PC-9 (cell line): ENCODE measurements at regions of chr1 and their contacts with region 1.

Region 1: DNA sequence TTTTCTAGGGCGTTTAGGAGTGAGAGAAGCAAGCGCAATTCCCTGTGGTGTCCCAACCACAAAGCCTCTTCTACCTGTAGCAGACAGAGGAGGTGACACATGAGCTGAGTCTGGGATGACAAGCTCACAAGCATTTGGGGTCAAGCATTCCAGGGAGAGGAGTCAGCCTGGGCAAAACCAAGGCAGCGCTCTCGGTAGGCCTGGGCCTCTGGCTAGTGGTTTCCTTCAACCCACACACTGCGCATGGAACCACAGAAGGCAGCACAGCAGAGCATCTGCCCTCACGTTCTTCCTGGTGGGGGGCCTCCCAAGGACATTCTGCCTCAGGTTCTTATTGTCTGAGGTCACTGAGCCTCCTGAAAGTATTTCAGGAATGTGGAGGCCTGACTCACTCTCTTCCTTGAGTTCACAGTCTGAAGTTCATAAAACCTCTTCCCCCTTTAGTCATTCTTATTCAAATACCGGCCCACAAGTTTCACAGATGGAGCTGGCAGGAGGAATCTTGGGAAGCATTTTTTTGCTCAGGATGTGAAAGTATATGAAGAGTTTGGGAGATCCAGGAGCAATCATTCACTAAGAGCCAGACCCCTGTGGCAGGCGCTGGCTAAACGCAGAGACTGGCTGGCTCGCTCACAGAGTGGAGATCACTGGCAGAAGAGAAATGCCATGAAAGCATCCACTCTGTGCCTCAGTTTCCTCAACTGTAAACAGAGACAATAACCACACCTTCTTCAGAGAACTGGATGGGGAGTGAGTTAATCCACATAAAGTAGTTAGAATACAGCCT is 26.8 kb downstream of the CCN1 start:
- DNase-seq: peak; percentile 95 to 100
- H3K4me3 ChIP-seq: peak overlapping the region; percentile 13; the same call in 1 of the 2 replicates
- H3K27ac ChIP-seq: peak overlapping the region; percentile 85
- H3K4me1 ChIP-seq: peaks cover 58% of the 10 kb centered on the region
- H3K27me3 ChIP-seq: no peaks in the 10 kb centered on the region
- CTCF ChIP-seq: no peak

Region 2: DNA sequence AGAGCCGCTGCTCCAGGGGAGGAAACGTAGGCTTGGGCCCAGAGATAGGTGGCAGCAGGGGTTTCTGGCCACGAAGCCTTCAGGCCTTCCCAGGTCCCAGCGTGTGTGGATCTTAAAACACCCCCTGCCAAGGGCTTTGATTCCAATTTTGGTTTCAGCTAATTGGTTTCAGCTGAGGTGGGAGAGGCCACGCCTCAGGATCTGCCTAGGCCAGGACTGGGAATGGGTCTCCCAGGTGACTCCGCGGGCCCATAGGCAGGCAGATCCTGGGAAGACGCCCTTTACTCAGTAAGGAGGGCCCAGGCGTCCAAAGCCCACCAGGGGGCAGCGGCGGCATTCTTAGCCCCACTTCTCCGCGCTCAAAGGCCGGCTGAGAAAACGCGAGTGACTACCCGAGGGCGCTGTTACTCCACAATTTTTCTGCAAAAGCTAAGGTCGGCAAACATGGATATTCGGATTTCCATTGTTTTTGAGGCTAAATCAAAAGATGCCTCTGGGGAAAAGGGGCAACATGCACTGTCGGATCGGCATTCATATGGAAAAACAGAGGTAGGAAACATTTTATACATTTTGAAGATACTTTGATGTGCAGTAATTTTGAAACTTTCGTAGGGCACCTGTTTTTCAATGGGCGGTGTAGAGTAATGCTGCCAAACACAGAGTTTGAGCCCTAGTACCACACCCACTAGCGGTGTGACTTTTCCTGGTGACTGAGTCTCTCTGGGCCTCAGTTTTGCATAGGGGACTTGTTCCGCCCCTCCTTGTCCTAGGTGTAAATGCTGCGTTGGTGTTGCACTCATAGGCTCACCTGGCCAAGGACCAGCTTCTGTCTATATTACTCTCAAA is 299.1 kb before region 1 on chr1:
- CTCF ChIA-PET with region 1: no interaction called
- POLR2A ChIA-PET with region 1: no interaction called
- intact Hi-C with region 1: loop called (anchors 1 kb)
- DNase-seq: peak; percentile 50 to 87
- H3K4me3 ChIP-seq: no peak overlapping the region
- H3K27ac ChIP-seq: no peak overlapping the region
- H3K4me1 ChIP-seq: peaks cover 3% of the 10 kb centered on the region
- H3K27me3 ChIP-seq: no peaks in the 10 kb centered on the region
- CTCF ChIP-seq: peak; percentile 81

Region 3: GRCh38 chr1:85484264-85484663 is 123.1 kb before region 1 on chr1:
- CTCF ChIA-PET with region 1: no interaction called
- POLR2A ChIA-PET with region 1: no interaction called
- intact Hi-C with region 1: no loop called
- DNase-seq: no peak
- H3K4me3 ChIP-seq: no peak overlapping the region
- H3K27ac ChIP-seq: no peak overlapping the region
- H3K4me1 ChIP-seq: peaks cover 6% of the 10 kb centered on the region; the same call in 1 of the 2 replicates
- H3K27me3 ChIP-seq: no peaks in the 10 kb centered on the region
- CTCF ChIP-seq: no peak

Region 4: DNA sequence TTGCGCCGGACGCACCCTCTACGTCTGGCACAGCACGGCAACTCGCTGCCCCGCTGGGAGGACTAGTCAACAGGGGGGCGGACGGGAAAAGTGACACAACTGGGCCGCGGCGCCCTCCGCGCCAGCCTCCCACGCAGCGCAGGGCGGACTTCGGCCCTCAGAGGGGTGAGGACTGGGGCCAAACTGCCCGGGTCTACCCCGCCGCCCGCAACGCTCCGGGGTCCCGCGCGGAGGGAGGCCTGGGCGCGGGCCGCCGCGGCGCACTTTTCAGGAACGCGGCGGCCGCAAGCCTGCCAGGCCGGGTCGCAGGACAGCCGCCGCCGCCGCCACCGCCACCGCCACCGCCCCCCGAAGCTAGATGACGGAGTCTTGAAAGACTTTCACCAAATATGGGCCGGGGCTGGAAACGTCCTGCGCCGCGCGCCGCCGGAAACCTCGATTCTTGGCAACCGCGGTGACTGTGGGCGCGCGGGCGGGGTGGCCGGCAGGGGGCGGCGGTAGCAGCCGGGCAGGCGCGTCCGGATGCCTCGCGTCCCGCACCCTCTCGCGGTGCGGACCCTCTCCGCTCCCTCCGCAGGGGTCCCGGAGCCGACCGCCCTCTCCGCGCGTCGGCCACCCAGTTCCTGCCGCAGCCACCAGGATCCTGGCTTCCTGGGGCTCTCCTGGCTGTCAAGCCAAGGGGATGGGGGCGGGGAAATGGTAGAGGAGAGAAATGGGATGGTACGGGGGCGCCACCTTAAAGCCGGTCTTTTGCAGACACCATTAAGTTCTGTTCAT is 30.5 kb before region 1 on chr1:
- CTCF ChIA-PET with region 1: no interaction called
- POLR2A ChIA-PET with region 1: interaction called, 8 read pairs
- intact Hi-C with region 1: loop called (anchors 2 kb)
- DNase-seq: peak; percentile 74 to 83
- H3K4me3 ChIP-seq: peak overlapping the region; percentile 74
- H3K27ac ChIP-seq: peak overlapping the region; percentile 47
- H3K4me1 ChIP-seq: peaks cover 50% of the 10 kb centered on the region
- H3K27me3 ChIP-seq: no peaks in the 10 kb centered on the region
- CTCF ChIP-seq: peak; percentile 79

Region 5: DNA sequence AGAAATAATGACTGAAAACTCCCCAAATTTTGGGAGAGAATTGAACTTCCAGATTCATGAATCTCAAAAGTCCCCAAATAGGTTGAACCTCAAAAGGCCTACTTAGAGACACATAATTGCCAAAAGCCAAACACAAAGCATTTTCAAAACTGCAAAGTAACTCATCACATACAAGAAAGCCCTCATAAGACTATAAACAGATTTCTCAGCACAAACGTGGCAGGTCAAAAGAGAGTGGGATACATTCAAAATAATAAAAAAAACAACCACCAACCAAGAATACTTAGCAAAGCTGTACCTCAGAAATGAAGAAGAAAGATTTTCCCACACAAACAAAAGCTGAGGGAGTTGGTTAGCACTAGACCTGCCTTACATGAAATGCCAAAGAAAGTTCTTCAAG is 31.1 kb after region 1 on chr1:
- CTCF ChIA-PET with region 1: interaction called, 5 read pairs
- POLR2A ChIA-PET with region 1: interaction called, 7 read pairs
- intact Hi-C with region 1: loop called (anchors 1 kb)
- DNase-seq: no peak
- H3K4me3 ChIP-seq: no peak overlapping the region
- H3K27ac ChIP-seq: no peak overlapping the region
- H3K4me1 ChIP-seq: no peaks in the 10 kb centered on the region
- H3K27me3 ChIP-seq: no peaks in the 10 kb centered on the region
- CTCF ChIP-seq: no peak

Region 6: GRCh38 chr1:85707990-85708828 is 100.9 kb after region 1 on chr1 and contains the start of gene ZNHIT6:
- CTCF ChIA-PET with region 1: no interaction called
- POLR2A ChIA-PET with region 1: no interaction called
- intact Hi-C with region 1: loop called (anchors 5 kb)
- DNase-seq: peak; percentile 91 to 98
- H3K4me3 ChIP-seq: peak within 1 kb of the TSS; percentile 79
- H3K27ac ChIP-seq: peak within 1 kb of the TSS; percentile 67
- H3K4me1 ChIP-seq: peaks cover 22% of the 10 kb centered on the region
- H3K27me3 ChIP-seq: no peaks in the 10 kb centered on the region
- CTCF ChIP-seq: peak; percentile 73
- total RNA-seq, gene ZNHIT6: 13.7 and 16.1 TPM in 2 replicates

Region 7: GRCh38 chr1:86507935-86508582 is 900.7 kb after region 1 on chr1:
- CTCF ChIA-PET with region 1: interaction called, 4 read pairs
- POLR2A ChIA-PET with region 1: no interaction called
- intact Hi-C with region 1: loop called (anchors 5 kb)
- DNase-seq: no peak
- H3K4me3 ChIP-seq: no peak overlapping the region
- H3K27ac ChIP-seq: no peak overlapping the region
- H3K4me1 ChIP-seq: peaks cover 9% of the 10 kb centered on the region
- H3K27me3 ChIP-seq: no peaks in the 10 kb centered on the region
- CTCF ChIP-seq: peak; percentile 72